ENCODE measurements at regions of chr12 and their contacts with region 1.

Region 1: DNA sequence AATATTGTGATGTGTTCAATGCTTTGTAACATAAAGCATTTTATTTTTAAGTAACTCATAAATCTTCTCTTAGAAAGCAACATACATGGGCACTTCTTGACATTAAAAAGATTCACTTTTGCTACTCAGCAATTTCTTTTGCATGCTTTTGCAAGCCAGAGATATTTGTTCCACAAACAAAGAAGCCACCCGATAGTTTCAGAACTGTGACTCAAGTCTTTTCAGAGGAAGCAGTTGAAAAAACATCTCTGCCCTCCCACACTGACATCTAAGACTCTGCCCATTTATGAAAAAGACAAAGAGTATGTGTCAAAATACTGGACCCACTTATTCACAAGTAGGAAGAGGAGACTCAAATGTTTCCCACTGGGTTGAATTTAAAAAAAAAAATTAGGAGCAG is 7.5 kb downstream of the APPL2 start:
- DNase-seq: peak; percentile 74
- H3K4me3 Mint-ChIP-seq: peak overlapping the region; percentile 48
- H3K27ac Mint-ChIP-seq: peak overlapping the region; percentile 67
- H3K4me1 Mint-ChIP-seq: peaks cover 47% of the 10 kb centered on the region
- H3K27me3 Mint-ChIP-seq: no peaks in the 10 kb centered on the region

Region 2: DNA sequence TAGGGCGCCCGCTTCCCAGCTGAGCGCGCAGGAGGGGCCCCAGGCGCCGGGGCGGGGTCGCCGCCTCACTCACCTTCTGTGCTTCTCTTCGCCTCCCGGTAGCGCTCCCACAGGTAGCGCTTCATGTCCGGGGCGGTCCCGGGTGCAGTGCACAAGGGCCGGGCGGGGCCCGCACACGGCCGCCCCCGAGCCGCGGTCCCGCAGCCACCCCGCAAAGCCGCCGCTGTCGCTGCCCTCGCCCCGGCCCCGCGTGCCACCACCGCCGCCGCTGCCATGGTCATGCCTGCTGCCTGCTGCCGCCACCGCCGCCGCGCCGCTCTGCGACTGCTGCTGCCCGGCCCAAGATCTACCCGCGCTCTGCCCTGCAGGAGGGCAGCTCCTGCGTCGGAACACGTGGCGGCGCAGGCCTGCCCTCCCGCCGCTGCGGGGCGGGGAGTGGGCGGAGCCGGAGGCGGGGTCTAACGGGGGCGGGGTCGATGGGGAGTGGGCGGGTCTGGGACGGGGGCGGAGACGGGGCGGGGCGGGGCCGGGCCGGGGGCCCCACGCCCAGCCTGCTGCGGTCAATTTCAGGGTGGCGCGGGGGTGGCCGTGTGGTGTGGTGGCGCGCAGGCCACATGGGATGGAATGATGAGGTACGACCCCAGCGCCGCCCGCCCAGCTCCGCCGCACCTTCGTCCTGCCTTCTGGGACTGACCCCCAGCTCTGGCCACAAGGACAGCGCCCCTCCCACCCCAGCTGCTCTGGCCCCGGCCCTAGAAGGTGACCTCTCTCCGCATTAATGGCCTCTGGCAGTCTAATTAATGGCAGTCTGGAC is 1387.4 kb before region 1 on chr12 and contains the start of gene NT5DC3:
- intact Hi-C with region 1: loop called (anchors 2 kb)
- DNase-seq: peak; percentile 93
- H3K4me3 Mint-ChIP-seq: peak within 1 kb of the TSS; percentile 85
- H3K27ac Mint-ChIP-seq: peak within 1 kb of the TSS; percentile 86
- H3K4me1 Mint-ChIP-seq: peaks cover 13% of the 10 kb centered on the region
- H3K27me3 Mint-ChIP-seq: peaks cover 33% of the 10 kb centered on the region
- total RNA-seq, gene NT5DC3: 12.3 and 14.9 TPM in 2 replicates

Region 3: GRCh38 chr12:105204916-105205315 is 23.6 kb before region 1 on chr12:
- intact Hi-C with region 1: loop called (anchors 2 kb)
- DNase-seq: no peak
- H3K4me3 Mint-ChIP-seq: no peak overlapping the region
- H3K27ac Mint-ChIP-seq: peak overlapping the region; percentile 89
- H3K4me1 Mint-ChIP-seq: peaks cover 20% of the 10 kb centered on the region
- H3K27me3 Mint-ChIP-seq: no peaks in the 10 kb centered on the region